ENCODE measurements at regions of chr1 and their contacts with region 1.

Region 1: GRCh38 chr1:218521375-218522169 is 176.4 kb downstream of the TGFB2 start:
- DNase-seq: no peak
- ATAC-seq: peak; percentile 80
- H3K4me3 ChIP-seq: no peak overlapping the region
- H3K27ac ChIP-seq: no peak overlapping the region
- H3K4me1 ChIP-seq: no peaks in the 10 kb centered on the region
- H3K27me3 ChIP-seq: no peaks in the 10 kb centered on the region
- CTCF ChIP-seq: peak; percentile 46 to 73 (median 69)
- EP300 ChIP-seq: no peak
- POLR2A ChIP-seq: no peak
- RAD21 ChIP-seq: peak; percentile 58

Region 2: DNA sequence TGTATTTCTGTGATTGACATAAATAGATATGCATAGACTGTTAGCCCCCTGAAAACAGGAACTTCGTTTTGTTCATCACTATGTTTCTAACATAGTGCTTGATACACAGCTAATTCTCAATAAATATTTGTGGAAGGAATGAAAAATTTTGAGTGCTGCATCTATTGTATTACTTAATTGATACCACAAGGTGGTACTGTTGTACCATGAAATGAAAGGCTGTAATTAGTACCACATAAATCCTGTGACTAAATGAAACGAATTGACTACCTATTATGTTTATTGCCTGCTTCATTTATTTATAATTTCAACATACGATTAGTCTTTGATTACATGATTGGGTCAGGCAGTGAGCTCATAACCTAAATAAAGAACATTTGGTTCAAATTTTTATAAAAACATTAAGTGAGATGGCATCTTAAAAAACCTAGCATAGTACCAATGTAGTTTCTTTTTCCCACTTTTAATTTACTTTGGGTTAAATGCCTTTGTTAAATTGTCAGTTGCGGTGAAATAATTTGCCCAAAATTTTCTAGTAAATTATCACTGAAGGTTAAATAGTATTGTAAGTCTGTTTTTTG is 191.4 kb before region 1 on chr1:
- CTCF ChIA-PET with region 1: interaction called, 5 read pairs
- POLR2A ChIA-PET with region 1: no interaction called
- RAD21 ChIA-PET with region 1: no interaction called
- SMC1A ChIA-PET with region 1: interaction called, 3 read pairs
- in situ Hi-C with region 1: no loop called
- intact Hi-C with region 1: loop called (anchors 2 kb)
- DNase-seq: no peak
- ATAC-seq: peak; percentile 76
- H3K4me3 ChIP-seq: no peak overlapping the region
- H3K27ac ChIP-seq: no peak overlapping the region
- H3K4me1 ChIP-seq: no peaks in the 10 kb centered on the region
- H3K27me3 ChIP-seq: no peaks in the 10 kb centered on the region
- CTCF ChIP-seq: peak; percentile 36 to 69 (median 39); a peak in 5 of 6 replicates
- EP300 ChIP-seq: no peak
- POLR2A ChIP-seq: no peak
- RAD21 ChIP-seq: peak; percentile 71

Region 3: DNA sequence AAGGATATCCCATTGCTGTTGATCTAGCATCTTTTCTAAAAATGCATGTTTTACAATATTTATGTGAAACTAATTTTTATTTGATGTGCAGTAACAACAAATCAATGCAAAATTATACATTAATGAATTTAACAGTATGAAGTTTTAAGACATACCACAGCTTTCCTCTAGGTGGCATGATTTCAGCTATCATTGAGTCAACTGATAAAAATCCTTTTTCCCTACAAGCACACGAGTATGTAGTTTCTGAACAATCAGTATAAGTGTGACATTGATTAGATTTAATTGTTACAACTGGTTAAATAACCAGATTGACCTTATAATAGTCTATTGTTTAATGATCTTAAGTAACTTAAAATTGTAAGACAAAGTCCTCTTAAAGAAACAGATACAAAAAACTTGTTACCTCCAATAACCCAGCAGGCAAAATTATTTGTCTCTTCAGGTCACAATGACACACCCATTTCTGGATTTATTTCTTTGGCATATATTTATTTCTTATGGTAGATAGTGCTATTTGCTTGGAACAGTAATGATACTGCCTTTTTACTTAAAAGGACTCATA is 182.2 kb before region 1 on chr1:
- CTCF ChIA-PET with region 1: interaction called, 12 read pairs
- POLR2A ChIA-PET with region 1: no interaction called
- RAD21 ChIA-PET with region 1: interaction called, 4 read pairs
- SMC1A ChIA-PET with region 1: no interaction called
- in situ Hi-C with region 1: no loop called
- intact Hi-C with region 1: loop called (anchors 2 kb)
- DNase-seq: no peak
- ATAC-seq: peak; percentile 69
- H3K4me3 ChIP-seq: no peak overlapping the region
- H3K27ac ChIP-seq: no peak overlapping the region
- H3K4me1 ChIP-seq: no peaks in the 10 kb centered on the region
- H3K27me3 ChIP-seq: no peaks in the 10 kb centered on the region
- CTCF ChIP-seq: peak; percentile 58 to 65 (median 58)
- EP300 ChIP-seq: no peak
- POLR2A ChIP-seq: no peak
- RAD21 ChIP-seq: peak; percentile 58

Region 4: DNA sequence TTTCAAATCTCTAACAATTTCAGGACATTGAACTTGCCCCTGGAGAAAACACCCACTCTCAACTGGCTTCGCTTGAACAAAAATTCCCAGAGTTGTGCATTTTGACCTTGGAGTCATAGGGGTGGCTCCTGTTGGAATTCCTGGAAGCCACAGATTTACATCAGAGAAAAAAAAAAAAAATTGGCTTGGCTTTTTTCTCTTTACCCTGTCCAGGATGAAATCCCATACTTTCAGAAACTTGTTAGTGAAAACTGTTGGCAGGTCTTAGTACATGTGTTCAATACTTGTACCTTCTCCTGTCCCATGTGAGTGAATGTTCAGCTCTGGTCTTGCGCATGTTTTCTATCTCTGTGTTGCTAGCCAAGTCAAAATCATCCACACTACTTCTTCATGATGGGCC is 52.4 kb after region 1 on chr1:
- CTCF ChIA-PET with region 1: no interaction called
- POLR2A ChIA-PET with region 1: no interaction called
- RAD21 ChIA-PET with region 1: no interaction called
- SMC1A ChIA-PET with region 1: no interaction called
- in situ Hi-C with region 1: no loop called
- intact Hi-C with region 1: no loop called
- DNase-seq: no peak
- ATAC-seq: no peak
- H3K4me3 ChIP-seq: no peak overlapping the region
- H3K27ac ChIP-seq: no peak overlapping the region
- H3K4me1 ChIP-seq: no peaks in the 10 kb centered on the region
- H3K27me3 ChIP-seq: no peaks in the 10 kb centered on the region
- CTCF ChIP-seq: no peak
- EP300 ChIP-seq: no peak
- POLR2A ChIP-seq: no peak
- RAD21 ChIP-seq: no peak

Region 5: DNA sequence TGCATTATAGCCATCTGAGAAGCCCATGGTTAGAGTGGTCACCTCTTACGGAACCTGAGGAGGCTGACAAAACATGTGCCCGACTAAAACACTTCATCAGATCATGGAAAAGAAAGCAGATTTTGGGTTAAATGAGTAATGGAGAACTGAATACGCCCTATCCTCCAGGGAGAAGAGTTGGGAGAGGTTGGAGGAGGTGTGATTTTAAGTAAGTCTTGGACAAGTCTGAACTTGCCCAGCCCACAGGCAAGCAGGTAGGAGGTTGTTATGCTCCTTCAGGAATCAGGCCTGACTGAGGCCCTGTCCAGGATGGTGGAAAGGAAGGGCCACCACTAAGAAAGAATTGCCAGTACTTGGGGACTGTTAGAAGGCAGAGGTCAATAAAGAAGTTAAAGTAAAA is 79.4 kb after region 1 on chr1:
- CTCF ChIA-PET with region 1: no interaction called
- POLR2A ChIA-PET with region 1: no interaction called
- RAD21 ChIA-PET with region 1: no interaction called
- SMC1A ChIA-PET with region 1: no interaction called
- in situ Hi-C with region 1: no loop called
- intact Hi-C with region 1: no loop called
- DNase-seq: no peak
- ATAC-seq: no peak
- H3K4me3 ChIP-seq: no peak overlapping the region
- H3K27ac ChIP-seq: no peak overlapping the region
- H3K4me1 ChIP-seq: no peaks in the 10 kb centered on the region
- H3K27me3 ChIP-seq: no peaks in the 10 kb centered on the region
- CTCF ChIP-seq: no peak
- EP300 ChIP-seq: no peak
- POLR2A ChIP-seq: no peak
- RAD21 ChIP-seq: no peak

Measured in GM12878 (cell line).